Activated T-helper 2 cell treated with anti-CD3 and anti-CD28 coated beads, Interferon-gamma antibody, Interleukin-2, Interleukin-4, amounts not matched to agents 10 μg/mL and 5 μg/mL and 100 μg/mL, durations not matched to agents 14 hours and 24 hours and 36 hours (primary cell): ENCODE measurements at regions of chr10 and their contacts with region 1.

Region 1: DNA sequence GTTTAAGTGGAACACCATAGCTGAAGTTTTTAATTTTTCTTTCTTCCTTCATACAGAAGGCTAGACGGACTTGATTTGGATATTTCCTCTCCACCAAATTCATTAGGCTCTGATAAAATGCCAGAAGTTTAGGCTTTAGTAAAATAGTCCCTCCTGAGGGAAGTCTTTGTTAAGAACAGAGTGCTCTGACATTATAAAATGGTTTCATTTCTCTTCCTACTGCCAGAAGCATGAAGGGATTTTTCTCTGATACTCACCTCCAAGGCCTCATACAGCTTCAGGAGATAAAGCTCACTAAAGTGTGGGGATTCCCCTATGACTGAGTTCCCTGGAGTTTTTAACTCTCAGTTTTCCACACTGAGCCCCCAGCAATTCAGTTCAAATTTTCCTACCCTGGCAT is 1489.6 kb downstream of the REEP3 start:
- DNase-seq: no peak
- H3K4me3 Mint-ChIP-seq: no peak overlapping the region
- H3K27ac Mint-ChIP-seq: no peak overlapping the region
- H3K4me1 Mint-ChIP-seq: no peaks in the 10 kb centered on the region
- H3K27me3 Mint-ChIP-seq: no peaks in the 10 kb centered on the region

Region 2: DNA sequence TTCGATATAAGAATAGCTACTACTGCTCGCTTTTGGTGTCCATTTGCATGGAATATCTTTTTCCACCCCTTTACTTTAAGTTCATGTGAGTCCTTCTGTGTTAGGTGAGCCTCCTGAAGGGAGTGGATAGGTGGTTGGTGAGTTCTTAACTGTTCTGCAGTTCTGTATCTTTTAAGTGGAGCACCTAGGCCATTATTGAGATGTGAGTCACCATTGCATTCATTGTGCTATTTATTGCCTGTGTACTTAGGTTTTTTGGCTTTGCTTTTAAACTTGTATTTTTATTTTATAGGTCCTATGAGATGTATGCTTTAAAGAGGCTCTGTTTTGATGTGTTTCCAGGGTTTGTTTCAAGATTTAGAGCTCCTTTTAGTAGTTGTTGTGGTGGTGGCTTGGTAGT is 58.8 kb before region 1 on chr10:
- intact Hi-C with region 1: loop called (anchors 10 kb)
- DNase-seq: no peak
- H3K4me3 Mint-ChIP-seq: no peak overlapping the region
- H3K27ac Mint-ChIP-seq: no peak overlapping the region
- H3K4me1 Mint-ChIP-seq: no peaks in the 10 kb centered on the region
- H3K27me3 Mint-ChIP-seq: no peaks in the 10 kb centered on the region

Region 3: DNA sequence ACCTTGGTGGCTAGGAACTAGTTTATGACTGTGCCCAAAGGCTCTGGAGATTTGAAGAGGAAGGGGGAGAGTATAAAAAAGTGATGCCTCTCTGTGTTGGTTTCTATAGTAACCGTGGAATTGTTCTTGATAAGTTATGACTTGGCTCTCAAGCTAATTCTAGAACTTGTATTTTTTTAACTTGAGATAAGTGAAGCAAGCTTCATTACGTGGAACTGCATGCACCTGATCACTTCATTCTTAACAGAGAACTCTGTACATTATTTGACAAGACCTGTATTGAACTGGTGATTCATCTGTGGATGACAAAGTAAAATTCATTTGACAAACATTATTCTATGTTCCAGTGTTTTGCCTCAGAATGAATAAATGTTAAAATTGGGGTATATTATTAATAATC is 37.5 kb before region 1 on chr10:
- intact Hi-C with region 1: no loop called
- DNase-seq: no peak
- H3K4me3 Mint-ChIP-seq: no peak overlapping the region
- H3K27ac Mint-ChIP-seq: no peak overlapping the region
- H3K4me1 Mint-ChIP-seq: no peaks in the 10 kb centered on the region
- H3K27me3 Mint-ChIP-seq: no peaks in the 10 kb centered on the region

Region 4: GRCh38 chr10:65408401-65408800 is 397.6 kb after region 1 on chr10:
- intact Hi-C with region 1: no loop called
- DNase-seq: no peak
- H3K4me3 Mint-ChIP-seq: no peak overlapping the region
- H3K27ac Mint-ChIP-seq: no peak overlapping the region
- H3K4me1 Mint-ChIP-seq: no peaks in the 10 kb centered on the region
- H3K27me3 Mint-ChIP-seq: no peaks in the 10 kb centered on the region

Region 5: DNA sequence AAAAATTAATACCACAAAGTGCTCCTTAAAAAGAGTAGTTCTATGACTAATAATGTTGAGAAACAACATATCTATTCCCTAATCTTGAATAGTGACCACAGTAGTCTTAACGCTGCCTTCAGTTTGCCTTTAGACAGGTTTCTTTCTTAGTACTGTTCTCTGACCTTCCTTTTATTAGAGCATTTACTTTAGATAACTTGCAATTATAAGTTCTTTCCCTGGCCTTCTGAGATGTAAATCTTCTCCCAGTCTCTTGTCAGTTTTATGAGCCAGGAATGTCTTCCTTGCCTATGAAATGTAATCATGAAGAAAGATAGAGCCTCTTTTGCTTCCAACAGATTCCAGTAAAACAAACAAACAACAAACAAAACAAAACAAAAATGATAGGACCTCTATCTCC is 795.1 kb after region 1 on chr10:
- intact Hi-C with region 1: no loop called
- DNase-seq: no peak
- H3K4me3 Mint-ChIP-seq: no peak overlapping the region
- H3K27ac Mint-ChIP-seq: no peak overlapping the region
- H3K4me1 Mint-ChIP-seq: no peaks in the 10 kb centered on the region
- H3K27me3 Mint-ChIP-seq: no peaks in the 10 kb centered on the region